Gastrocnemius medialis (tissue), 4 donors: ENCODE measurements at regions of chr10 and their contacts with region 1.

Region 1: DNA sequence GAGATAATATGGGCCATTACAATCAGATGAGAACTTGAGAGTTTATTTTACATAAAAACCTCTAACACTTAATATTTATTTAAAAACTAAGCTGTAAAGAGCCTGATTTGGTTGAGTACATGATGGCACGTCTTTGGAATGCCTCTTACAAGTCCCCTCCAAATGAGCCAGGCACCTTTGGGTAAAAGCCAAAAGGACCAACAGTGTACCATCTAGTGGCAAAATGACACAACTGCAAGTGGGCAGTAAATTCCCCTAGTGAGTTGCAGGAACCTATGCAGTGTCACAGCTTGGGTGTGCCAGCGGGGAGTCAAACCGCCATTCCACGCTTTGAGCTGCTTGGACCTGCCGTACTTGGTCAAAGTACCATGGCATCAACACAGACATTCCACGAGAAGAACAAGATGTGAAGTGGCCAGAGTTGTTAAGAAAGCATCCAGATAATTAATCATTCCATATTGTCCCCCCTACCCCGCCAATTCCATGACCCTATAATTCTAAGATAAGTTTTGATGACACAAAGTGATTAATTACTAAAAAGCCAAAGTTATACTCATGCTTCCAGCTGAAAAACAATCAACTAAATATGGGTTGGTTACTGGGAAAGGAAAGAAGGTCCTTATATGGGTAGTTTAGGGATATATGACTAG is 115.2 kb downstream of the SORBS1 start:
- DNase-seq: peak; percentile 46 to 81
- ATAC-seq: peak; percentile 69 to 86
- H3K4me3 ChIP-seq: peak overlapping the region in 1 of 4 donors; percentile 18
- H3K27ac ChIP-seq: peak overlapping the region; percentile 83 to 90 (median 86)
- H3K4me1 ChIP-seq: peaks cover 69% of the 10 kb centered on the region in 2 donors
- H3K27me3 ChIP-seq: no peaks in the 10 kb centered on the region
- CTCF ChIP-seq: peak; percentile 73 to 83 (median 80)
- POLR2A ChIP-seq: no peak

Region 2: GRCh38 chr10:95290461-95291364 is 155.2 kb before region 1 on chr10 and contains the start of gene PDLIM1:
- in situ Hi-C with region 1: no loop called
- intact Hi-C with region 1: no loop called
- DNase-seq: peak; percentile 54 to 74
- ATAC-seq: peak; percentile 41 to 44
- H3K4me3 ChIP-seq: peak within 1 kb of the TSS; percentile 66 to 89 (median 72)
- H3K27ac ChIP-seq: peak within 1 kb of the TSS; percentile 80 to 97 (median 92)
- H3K4me1 ChIP-seq: peaks cover 27 to 36% of the 10 kb centered on the region in 2 donors
- H3K27me3 ChIP-seq: no peaks in the 10 kb centered on the region
- CTCF ChIP-seq: peak; percentile 40 to 55 (median 44)
- POLR2A ChIP-seq: peak; percentile 89 to 93
- total RNA-seq, gene PDLIM1: 157 to 572 (median 272) TPM

Region 3: DNA sequence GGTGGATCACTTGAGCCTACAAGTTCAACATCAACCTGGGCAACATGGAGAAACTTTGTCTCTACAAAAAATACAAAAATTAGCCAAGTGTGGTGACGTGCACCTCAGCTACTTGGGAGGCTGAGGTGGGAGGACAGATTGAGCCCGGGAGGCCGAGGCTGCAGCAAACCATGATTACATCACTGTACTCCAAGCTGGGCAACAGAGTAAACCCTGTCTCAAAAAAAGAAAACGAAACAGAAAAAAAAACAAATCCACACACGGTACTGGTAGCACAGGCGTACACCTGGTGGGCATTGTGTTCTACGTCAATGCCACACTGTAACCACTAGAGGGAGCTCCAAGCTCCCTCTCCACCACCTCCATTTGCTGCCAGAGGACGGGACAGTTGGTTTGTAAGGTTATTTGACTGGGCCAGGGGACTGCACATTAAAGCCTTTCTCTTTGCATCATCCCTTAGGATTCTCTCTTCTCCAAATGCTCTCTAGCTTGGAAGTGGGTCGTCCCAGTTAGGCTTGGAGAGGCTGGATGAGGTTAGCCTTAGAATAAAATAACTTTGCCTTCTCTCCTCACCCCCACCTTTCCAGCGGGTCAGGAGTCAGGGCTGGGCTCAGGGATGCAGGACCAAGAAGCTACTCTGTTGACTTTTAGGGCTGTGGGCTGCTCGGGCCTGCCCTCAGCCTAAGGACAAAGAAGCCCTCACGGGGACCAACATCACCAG is 15.6 kb before region 1 on chr10:
- in situ Hi-C with region 1: no loop called
- intact Hi-C with region 1: loop called (anchors 2 kb)
- DNase-seq: peak; percentile 46 to 58
- ATAC-seq: peak; percentile 85 to 91
- H3K4me3 ChIP-seq: no peak overlapping the region
- H3K27ac ChIP-seq: peak overlapping the region; percentile 57 to 73 (median 66)
- H3K4me1 ChIP-seq: peaks cover 23 to 43% of the 10 kb centered on the region in 2 donors
- H3K27me3 ChIP-seq: no peaks in the 10 kb centered on the region
- CTCF ChIP-seq: peak; percentile 93 to 99 (median 95)
- POLR2A ChIP-seq: no peak

Region 4: GRCh38 chr10:95467162-95467599 is 21.2 kb after region 1 on chr10:
- in situ Hi-C with region 1: no loop called
- intact Hi-C with region 1: loop called (anchors 1 kb)
- DNase-seq: peak; percentile 64 to 86
- ATAC-seq: peak; percentile 75 to 91
- H3K4me3 ChIP-seq: no peak overlapping the region
- H3K27ac ChIP-seq: peak overlapping the region; percentile 92 to 99 (median 95)
- H3K4me1 ChIP-seq: peaks cover 73 to 89% of the 10 kb centered on the region in 2 donors
- H3K27me3 ChIP-seq: no peaks in the 10 kb centered on the region
- CTCF ChIP-seq: peak in 1 of 5 experiments; percentile 43
- POLR2A ChIP-seq: peak in 1 of 2 donors; percentile 36

Region 5: GRCh38 chr10:95478935-95479334 is 33.0 kb after region 1 on chr10:
- in situ Hi-C with region 1: no loop called
- intact Hi-C with region 1: no loop called
- DNase-seq: peak; percentile 58 to 76
- ATAC-seq: peak; percentile 29 to 40
- H3K4me3 ChIP-seq: peak overlapping the region; percentile 2 to 29 (median 8)
- H3K27ac ChIP-seq: peak overlapping the region; percentile 92 to 99 (median 95)
- H3K4me1 ChIP-seq: peaks cover 85 to 87% of the 10 kb centered on the region in 2 donors
- H3K27me3 ChIP-seq: no peaks in the 10 kb centered on the region
- CTCF ChIP-seq: no peak
- POLR2A ChIP-seq: no peak